Activated T-helper 2 cell treated with anti-CD3 and anti-CD28 coated beads, Interferon-gamma antibody, Interleukin-2, Interleukin-4, amounts not matched to agents 10 μg/mL and 5 μg/mL and 100 μg/mL, durations not matched to agents 14 hours and 24 hours and 36 hours (primary cell): ENCODE measurements at regions of chr1 and their contacts with region 1.

Region 1: DNA sequence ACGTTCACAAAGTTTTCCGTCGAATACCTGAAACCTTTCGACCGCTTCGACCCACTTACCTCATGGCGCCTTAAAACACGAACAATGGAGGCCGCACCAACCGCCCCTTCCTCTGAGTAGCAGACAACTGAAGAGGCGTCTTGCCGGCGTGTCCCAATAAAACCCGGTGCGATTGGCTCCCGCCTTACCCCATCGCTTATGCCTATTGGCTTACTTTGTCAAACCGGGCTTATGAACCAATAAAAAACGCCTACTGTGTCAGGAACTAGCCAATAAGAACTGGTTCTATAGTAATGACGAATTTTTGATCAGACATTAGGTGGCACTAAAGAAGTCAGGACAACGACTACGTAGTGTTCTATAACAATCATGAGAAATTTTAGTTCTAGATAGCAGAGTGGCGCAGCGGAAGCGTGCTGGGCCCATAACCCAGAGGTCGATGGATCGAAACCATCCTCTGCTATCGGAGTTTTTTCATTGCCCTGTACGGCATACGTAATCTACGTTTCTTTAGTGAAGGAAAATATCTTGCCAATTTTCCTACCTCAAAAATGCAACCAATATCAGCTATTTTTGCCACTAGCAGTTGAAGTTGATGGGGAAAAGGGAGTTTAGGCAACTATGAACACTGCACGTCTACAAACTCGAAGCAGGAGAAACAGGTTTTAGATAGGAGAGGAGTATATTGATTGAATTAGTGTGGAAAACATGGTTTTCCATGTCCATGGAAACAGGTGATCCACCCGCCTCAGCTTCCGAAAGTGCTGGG is at the start of gene ILF2:
- DNase-seq: peak; percentile 97
- H3K4me3 Mint-ChIP-seq: no peak within 1 kb of the TSS
- H3K27ac Mint-ChIP-seq: no peak within 1 kb of the TSS
- H3K4me1 Mint-ChIP-seq: peaks cover 25% of the 10 kb centered on the region
- H3K27me3 Mint-ChIP-seq: no peaks in the 10 kb centered on the region
- total RNA-seq, gene ILF2: 352 and 358 TPM in 2 replicates

Region 2: DNA sequence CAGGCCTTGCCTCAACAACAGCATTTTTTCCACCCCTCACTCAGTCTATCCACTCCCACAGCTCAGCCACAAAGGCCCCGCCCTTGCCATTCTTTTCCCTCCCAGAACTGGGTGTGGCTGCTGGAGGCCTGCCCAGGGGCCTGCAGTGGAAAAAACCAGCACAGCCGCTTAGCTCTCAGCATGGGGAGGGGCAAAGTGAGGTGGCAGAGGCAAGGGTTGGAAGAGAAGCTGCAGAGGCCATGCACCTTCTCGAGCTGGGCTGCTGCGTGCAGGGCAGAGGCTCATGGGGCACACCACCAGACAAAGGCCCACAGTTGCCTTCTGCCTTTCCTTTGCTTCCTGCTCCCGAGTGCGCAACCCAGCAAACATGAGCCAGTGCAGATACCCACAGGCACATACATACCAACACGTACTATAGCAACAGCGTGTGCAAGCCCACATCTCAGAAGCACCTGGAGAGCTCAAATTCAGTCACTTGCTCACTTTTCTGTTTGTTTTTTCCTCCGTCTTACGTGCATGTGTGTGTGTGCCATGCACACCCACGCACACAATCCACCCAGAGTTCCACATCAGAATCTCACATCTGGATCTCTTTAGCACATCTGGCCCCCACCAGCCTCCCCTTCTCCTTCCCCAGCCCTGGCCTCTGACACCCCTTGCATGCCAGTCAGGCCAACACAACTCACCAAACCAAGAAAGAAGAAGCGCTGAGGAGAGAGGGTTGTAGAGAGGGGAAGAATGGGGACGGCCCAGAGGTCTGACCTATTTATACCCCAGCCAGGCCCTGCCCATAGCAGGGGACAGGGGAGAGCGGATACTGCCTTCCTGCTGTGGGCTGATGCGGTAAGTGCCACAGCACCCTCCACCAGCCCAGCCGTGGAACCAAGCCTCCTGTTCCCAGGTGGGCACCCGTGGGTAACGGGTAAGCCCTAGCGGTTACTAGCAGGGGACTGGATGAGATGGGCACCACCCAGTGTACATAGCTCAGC is 125.7 kb before region 1 on chr1 and contains the start of gene S100A4:
- intact Hi-C with region 1: loop called (anchors 5 kb)
- DNase-seq: peak; percentile 95
- H3K4me3 Mint-ChIP-seq: peak within 1 kb of the TSS; percentile 88
- H3K27ac Mint-ChIP-seq: peak within 1 kb of the TSS; percentile 97
- H3K4me1 Mint-ChIP-seq: peaks cover 70% of the 10 kb centered on the region
- H3K27me3 Mint-ChIP-seq: no peaks in the 10 kb centered on the region
- total RNA-seq, gene S100A4: 175 and 181 TPM in 2 replicates

Region 3: DNA sequence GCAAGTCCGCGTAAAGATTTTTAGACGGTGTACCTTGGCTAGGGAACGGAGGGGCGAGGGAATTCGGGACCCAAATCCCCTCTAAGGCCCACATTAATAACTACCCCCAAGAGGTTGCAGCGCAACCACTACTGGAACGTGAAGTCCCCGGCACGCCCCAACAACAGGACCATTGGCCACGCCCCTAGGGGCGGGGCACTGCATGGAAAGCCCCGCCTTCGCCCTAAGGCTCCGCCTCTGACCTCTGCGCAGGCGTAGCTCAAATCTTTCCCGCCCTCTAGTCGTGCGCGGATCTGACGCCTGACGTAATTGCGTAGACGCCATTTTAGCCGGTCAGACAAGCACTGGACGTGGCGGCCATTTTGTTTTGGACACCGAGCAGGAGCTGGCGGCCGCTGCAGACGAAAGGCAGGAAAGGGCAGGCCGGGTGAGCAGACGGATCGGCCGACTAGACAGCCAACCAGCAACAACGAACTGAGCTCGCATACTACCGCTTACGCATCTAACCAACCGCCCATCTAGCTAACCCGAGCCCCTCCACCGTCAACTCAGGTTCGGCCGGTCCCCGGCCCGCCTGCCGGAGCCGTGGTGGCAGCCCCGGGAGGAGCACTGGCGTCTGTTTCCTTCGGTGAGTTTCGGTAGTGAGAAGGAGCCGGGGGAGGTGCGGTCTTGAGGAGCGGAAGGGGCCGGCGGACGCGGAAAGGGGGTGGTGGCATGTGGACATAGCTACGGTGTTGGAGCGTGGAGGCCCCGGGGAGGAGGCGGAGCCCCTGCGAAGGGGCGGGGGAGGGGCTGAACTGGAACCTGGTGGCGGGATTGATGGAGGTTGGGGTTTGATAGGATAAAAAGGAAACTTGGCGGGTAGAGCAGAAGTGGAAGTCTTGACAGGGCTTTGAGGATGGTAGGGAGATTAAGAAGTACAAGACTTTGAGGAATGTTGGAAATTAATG is 37.1 kb before region 1 on chr1 and contains the start of gene CHTOP:
- intact Hi-C with region 1: loop called (anchors 1 kb)
- DNase-seq: peak; percentile 96
- H3K4me3 Mint-ChIP-seq: peak within 1 kb of the TSS; percentile 96
- H3K27ac Mint-ChIP-seq: peak within 1 kb of the TSS; percentile 100
- H3K4me1 Mint-ChIP-seq: peaks cover 28% of the 10 kb centered on the region
- H3K27me3 Mint-ChIP-seq: no peaks in the 10 kb centered on the region
- total RNA-seq, gene CHTOP: 94.6 and 98.7 TPM in 2 replicates

Region 4: DNA sequence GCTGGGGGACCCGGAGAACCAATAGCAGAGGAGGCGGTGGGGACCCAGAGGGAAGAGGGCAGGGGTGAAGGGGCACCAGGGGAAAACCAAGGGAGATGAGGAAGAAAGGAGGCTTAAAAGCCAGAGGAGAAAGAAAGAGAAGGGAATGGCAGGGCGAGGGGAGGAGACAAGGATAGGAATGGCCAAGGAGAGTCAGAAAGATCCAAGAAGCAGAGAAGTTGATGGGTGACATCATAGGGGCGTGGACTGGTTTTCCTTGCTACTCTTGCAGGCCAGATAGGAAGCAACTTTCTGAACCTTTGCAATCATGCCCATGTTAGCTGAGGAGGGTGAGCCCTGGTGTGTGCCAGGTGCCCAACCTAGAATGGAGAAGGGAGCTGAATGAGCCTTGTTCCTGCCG is 12.8 kb after region 1 on chr1:
- intact Hi-C with region 1: no loop called
- DNase-seq: no peak
- H3K4me3 Mint-ChIP-seq: no peak overlapping the region
- H3K27ac Mint-ChIP-seq: peak overlapping the region; percentile 15
- H3K4me1 Mint-ChIP-seq: peaks cover 7% of the 10 kb centered on the region
- H3K27me3 Mint-ChIP-seq: peaks cover 40% of the 10 kb centered on the region

Region 5: DNA sequence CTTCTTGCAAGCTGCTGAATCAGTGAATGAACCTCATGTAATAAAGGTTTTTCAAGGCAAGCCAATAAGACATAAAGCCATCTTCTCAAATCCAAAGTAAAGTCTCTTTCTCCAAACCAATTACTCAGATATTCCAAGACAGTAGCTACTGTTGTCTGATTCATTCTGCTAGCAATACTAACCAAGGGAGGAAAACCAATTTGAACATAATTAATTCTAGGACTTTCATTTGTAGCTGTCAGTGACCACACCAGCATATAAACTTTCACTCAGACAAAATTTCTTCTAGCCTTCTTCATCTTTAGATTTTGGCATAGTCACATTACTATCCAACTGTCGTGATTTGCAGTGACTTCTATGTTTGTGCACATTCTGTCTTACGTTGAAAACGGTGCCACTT is 46.3 kb after region 1 on chr1:
- intact Hi-C with region 1: no loop called
- DNase-seq: no peak
- H3K4me3 Mint-ChIP-seq: no peak overlapping the region
- H3K27ac Mint-ChIP-seq: no peak overlapping the region
- H3K4me1 Mint-ChIP-seq: peaks cover 2% of the 10 kb centered on the region
- H3K27me3 Mint-ChIP-seq: peaks cover 11% of the 10 kb centered on the region

Region 6: DNA sequence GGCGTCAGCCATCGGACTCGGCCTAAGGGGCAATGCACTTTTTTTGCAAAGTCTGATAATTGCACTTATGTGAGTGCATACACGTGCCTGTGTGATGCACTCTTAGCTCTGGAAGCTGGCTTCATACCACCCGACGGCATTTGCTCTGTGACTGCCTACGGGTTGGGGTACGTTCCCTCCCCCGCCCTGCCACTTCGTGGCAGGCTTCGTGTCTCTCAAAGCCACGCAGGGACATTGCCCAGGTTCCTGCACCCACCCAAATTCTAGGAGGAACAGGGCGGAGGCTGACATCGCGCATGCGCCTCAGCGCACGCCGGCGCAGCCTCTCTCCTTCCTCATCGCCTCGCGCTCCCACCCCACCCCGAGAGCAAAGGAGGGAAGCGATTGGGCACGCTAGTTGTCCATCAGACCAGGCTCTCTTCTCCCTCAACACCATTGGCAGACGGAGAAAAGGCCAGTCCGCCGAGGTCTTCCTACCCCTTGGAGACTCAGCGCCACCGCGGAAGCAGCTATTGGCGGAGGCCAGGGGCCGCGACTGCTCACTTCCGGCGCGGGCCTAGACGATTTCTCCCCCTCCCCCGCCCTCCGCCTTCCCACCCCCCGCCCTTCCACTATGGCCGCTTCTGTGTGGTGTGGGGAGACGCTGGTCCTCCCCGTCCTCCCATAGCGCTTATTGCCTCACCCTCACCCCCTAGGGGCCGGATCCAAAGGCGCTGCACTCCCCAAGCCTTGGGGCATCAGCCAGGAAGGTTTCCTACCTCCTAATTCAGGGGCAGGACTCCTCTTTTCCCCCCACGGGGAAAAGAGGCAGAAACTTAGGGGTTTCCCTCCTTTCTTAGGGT is 56.6 kb after region 1 on chr1 and contains the start of gene INTS3:
- intact Hi-C with region 1: loop called (anchors 5 kb)
- DNase-seq: peak; percentile 100
- H3K4me3 Mint-ChIP-seq: peak within 1 kb of the TSS; percentile 95
- H3K27ac Mint-ChIP-seq: peak within 1 kb of the TSS; percentile 94
- H3K4me1 Mint-ChIP-seq: peaks cover 31% of the 10 kb centered on the region
- H3K27me3 Mint-ChIP-seq: no peaks in the 10 kb centered on the region
- total RNA-seq, gene INTS3: 53.8 and 54.0 TPM in 2 replicates

Region 7: GRCh38 chr1:153922972-153923925 is 252.2 kb after region 1 on chr1 and contains the start of gene GATAD2B:
- intact Hi-C with region 1: loop called (anchors 1 kb)
- DNase-seq: peak; percentile 99
- H3K4me3 Mint-ChIP-seq: peak within 1 kb of the TSS; percentile 94
- H3K27ac Mint-ChIP-seq: peak within 1 kb of the TSS; percentile 94
- H3K4me1 Mint-ChIP-seq: peaks cover 35% of the 10 kb centered on the region
- H3K27me3 Mint-ChIP-seq: no peaks in the 10 kb centered on the region
- total RNA-seq, gene GATAD2B: 70.0 and 70.2 TPM in 2 replicates

Region 8: GRCh38 chr1:154097873-154098272 is 426.8 kb after region 1 on chr1:
- intact Hi-C with region 1: no loop called
- DNase-seq: no peak
- H3K4me3 Mint-ChIP-seq: no peak overlapping the region
- H3K27ac Mint-ChIP-seq: no peak overlapping the region
- H3K4me1 Mint-ChIP-seq: no peaks in the 10 kb centered on the region
- H3K27me3 Mint-ChIP-seq: peaks cover 2% of the 10 kb centered on the region

Region 9: GRCh38 chr1:154183045-154183915 is 512.2 kb after region 1 on chr1:
- intact Hi-C with region 1: loop called (anchors 2 kb)
- DNase-seq: peak; percentile 93
- H3K4me3 Mint-ChIP-seq: peak overlapping the region; percentile 99
- H3K27ac Mint-ChIP-seq: peak overlapping the region; percentile 98
- H3K4me1 Mint-ChIP-seq: peaks cover 43% of the 10 kb centered on the region
- H3K27me3 Mint-ChIP-seq: peaks cover 3% of the 10 kb centered on the region

Region 10: GRCh38 chr1:154272217-154272998 is 601.4 kb after region 1 on chr1 and contains the start of gene HAX1:
- intact Hi-C with region 1: loop called (anchors 5 kb)
- DNase-seq: peak; percentile 96
- H3K4me3 Mint-ChIP-seq: peak within 1 kb of the TSS; percentile 96
- H3K27ac Mint-ChIP-seq: peak within 1 kb of the TSS; percentile 94
- H3K4me1 Mint-ChIP-seq: peaks cover 28% of the 10 kb centered on the region
- H3K27me3 Mint-ChIP-seq: no peaks in the 10 kb centered on the region
- total RNA-seq, gene HAX1: 112 and 113 TPM in 2 replicates